SK-N-SH (cell line): ENCODE measurements at regions of chr2 and their contacts with region 1.

Region 1: DNA sequence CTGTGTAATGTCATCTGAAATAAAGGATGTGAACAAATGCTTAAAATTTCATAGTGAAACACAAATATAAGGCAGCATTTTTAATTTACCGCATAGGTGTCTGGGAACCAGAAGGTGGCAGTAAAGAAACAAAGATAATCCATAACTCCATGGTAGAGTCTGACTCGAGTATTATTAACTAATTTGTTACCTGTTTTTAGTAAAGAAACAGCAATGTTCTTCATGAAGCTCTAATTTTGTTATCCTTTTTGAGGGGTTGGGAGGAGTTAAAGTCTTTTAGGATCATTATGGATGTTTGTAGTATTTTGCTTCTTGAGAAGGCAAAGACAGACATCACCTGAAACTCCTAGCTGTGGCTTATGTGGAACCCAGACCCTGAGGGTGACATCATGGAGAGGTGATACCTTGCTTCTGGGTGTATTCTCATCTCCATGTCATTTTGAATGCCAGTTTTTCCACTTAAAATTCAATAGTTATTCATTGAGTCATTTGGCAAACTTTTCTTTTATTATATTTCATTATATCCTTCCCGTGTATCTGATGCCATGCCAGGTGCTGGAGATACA is 286.2 kb upstream of the EPAS1 start:
- DNase-seq: peak; percentile 72
- H3K4me3 ChIP-seq: no peak overlapping the region
- H3K27ac ChIP-seq: peak overlapping the region in 1 of 2 experiments; percentile 28; a peak in 2 of 4 replicates
- H3K4me1 ChIP-seq: peaks cover 8 to 23% of the 10 kb centered on the region in 2 experiments; a peak in 3 of 4 replicates
- H3K27me3 ChIP-seq: no peaks in the 10 kb centered on the region
- CTCF ChIP-seq: peak; percentile 92
- EP300 ChIP-seq: no peak
- RAD21 ChIP-seq: peak; percentile 93

Region 2: DNA sequence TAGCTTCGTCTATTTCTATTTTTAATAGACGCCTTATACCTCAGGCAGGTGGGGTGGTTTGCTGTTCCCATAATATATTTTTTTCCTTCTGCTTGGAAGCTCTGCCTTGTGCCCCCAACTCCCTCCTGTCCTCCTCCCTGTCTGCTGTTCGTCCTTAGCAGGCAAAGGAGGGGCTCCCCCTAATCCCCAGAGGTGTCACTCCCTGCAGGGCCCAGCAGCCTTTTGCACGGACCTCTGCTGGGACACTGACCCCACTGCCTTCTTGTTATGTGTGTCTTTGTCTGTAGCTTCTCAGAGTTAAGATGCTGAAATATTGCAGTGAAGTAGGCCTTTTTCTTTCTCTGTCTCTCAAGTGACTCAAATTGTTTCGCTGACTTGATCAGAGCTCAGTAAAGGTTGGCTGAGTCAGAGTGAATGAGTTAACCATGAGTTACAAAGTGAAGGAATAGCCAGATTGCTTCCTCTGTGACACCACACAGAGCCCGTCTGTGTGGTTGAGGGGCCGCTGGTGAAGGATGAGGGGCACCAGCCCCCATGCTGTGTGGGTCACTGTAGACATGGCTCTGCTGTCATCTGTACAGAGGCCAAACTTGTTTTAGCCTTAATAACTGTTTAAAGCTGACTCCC is 311.9 kb before region 1 on chr2:
- CTCF ChIA-PET with region 1: no interaction called
- POLR2A ChIA-PET with region 1: no interaction called
- DNase-seq: no peak
- H3K4me3 ChIP-seq: no peak overlapping the region
- H3K27ac ChIP-seq: peak overlapping the region; percentile 66 to 69; a peak in 3 of 4 replicates
- H3K4me1 ChIP-seq: peaks cover 17 to 35% of the 10 kb centered on the region in 2 experiments
- H3K27me3 ChIP-seq: no peaks in the 10 kb centered on the region
- CTCF ChIP-seq: no peak
- EP300 ChIP-seq: peak in 1 of 2 experiments; percentile 49; a peak in 2 of 4 replicates
- RAD21 ChIP-seq: no peak

Region 3: DNA sequence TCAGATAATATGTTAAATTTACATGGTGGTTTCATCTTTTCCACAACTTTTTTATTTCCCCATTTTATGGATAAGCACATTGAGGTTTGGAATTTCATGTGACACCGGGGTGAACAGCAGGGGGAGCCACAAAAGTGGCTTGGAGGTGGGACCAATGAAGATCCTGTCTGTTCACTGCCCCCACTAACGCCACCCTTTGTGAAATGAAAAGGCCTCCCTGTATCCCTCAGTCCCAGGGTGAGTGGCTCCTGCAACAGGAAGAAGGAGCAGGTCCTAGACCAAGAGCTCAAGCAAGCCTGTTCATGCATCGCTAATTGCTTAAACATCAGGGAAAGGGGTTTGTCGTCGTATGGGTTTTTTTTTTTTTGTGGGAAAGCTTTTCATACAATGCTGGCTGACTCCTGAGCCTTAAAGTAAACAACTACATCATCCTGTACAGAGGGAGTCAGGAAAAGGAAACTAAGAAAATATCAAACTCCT is 18.4 kb after region 1 on chr2:
- CTCF ChIA-PET with region 1: interaction called, 19 read pairs
- POLR2A ChIA-PET with region 1: no interaction called
- DNase-seq: no peak
- H3K4me3 ChIP-seq: no peak overlapping the region
- H3K27ac ChIP-seq: no peak overlapping the region
- H3K4me1 ChIP-seq: peaks cover 5 to 9% of the 10 kb centered on the region in 2 experiments; a peak in 1 of 4 replicates
- H3K27me3 ChIP-seq: no peaks in the 10 kb centered on the region
- CTCF ChIP-seq: peak; percentile 41
- EP300 ChIP-seq: no peak
- RAD21 ChIP-seq: no peak

Region 4: DNA sequence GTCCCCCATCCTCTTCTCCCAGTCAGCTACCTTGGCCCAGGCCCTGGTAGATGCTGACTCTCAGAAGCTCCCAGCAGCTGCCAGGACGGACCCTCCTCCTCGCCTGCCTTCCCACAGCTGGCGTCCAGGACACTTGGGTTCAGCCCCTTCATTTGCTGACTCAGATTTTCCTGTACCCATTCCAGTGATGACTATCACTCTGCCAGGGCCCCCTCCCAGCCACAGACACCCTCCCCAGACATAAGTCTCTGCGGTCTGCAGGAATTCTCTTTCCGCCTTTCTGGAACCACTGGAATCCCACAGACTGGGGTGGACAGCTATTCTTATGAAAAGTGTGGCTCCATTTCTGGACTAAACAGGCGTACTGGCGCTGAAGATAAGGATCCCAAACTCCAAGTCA is 25.9 kb after region 1 on chr2:
- CTCF ChIA-PET with region 1: interaction called, 12 read pairs
- POLR2A ChIA-PET with region 1: no interaction called
- DNase-seq: no peak
- H3K4me3 ChIP-seq: no peak overlapping the region
- H3K27ac ChIP-seq: no peak overlapping the region
- H3K4me1 ChIP-seq: no peaks in the 10 kb centered on the region; a peak in 1 of 4 replicates
- H3K27me3 ChIP-seq: no peaks in the 10 kb centered on the region
- CTCF ChIP-seq: no peak
- EP300 ChIP-seq: peak in 1 of 2 experiments; percentile 53; a peak in 1 of 4 replicates
- RAD21 ChIP-seq: no peak

Region 5: DNA sequence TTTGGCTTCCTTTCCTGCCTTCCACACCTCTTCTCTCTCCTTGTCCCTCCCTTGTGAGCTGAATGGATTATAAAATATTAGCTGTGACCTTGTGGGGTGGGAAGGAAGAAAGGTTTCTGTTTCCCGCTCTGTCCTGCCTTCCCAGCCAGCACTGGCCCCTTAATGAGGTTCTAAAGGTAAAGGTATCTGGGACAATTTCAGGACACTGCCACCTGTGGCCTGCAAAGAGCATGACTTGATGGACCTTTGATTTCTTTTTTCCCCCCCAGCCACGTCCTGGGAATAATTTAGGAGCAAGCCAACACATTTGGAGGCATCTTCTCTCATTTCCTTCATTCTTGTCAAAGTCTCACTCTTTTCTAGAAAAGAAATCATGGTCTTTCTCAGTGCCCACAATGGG is 39.5 kb after region 1 on chr2:
- CTCF ChIA-PET with region 1: interaction called, 15 read pairs
- POLR2A ChIA-PET with region 1: no interaction called
- DNase-seq: no peak
- H3K4me3 ChIP-seq: no peak overlapping the region
- H3K27ac ChIP-seq: no peak overlapping the region
- H3K4me1 ChIP-seq: peaks cover 0 to 9% of the 10 kb centered on the region in 2 experiments; a peak in 1 of 4 replicates
- H3K27me3 ChIP-seq: no peaks in the 10 kb centered on the region
- CTCF ChIP-seq: peak; percentile 21; the same call in 1 of the 2 replicates
- EP300 ChIP-seq: no peak
- RAD21 ChIP-seq: no peak

Region 6: GRCh38 chr2:46062637-46063412 is 51.8 kb after region 1 on chr2:
- CTCF ChIA-PET with region 1: interaction called, 10 read pairs
- POLR2A ChIA-PET with region 1: no interaction called
- DNase-seq: peak; percentile 82
- H3K4me3 ChIP-seq: no peak overlapping the region; a peak in 1 of 4 replicates
- H3K27ac ChIP-seq: no peak overlapping the region
- H3K4me1 ChIP-seq: peaks cover 14 to 25% of the 10 kb centered on the region in 2 experiments
- H3K27me3 ChIP-seq: no peaks in the 10 kb centered on the region
- CTCF ChIP-seq: peak; percentile 99
- EP300 ChIP-seq: no peak
- RAD21 ChIP-seq: peak; percentile 97

Region 7: GRCh38 chr2:46340702-46341420 is 329.9 kb after region 1 on chr2:
- CTCF ChIA-PET with region 1: interaction called, 10 read pairs
- POLR2A ChIA-PET with region 1: no interaction called
- DNase-seq: no peak
- H3K4me3 ChIP-seq: no peak overlapping the region
- H3K27ac ChIP-seq: peak overlapping the region; percentile 57 to 99; a peak in 3 of 4 replicates
- H3K4me1 ChIP-seq: peaks cover 44 to 96% of the 10 kb centered on the region in 2 experiments
- H3K27me3 ChIP-seq: no peaks in the 10 kb centered on the region
- CTCF ChIP-seq: no peak
- EP300 ChIP-seq: no peak
- RAD21 ChIP-seq: no peak

Region 8: GRCh38 chr2:46377176-46377581 is 366.2 kb after region 1 on chr2:
- CTCF ChIA-PET with region 1: interaction called, 15 read pairs
- POLR2A ChIA-PET with region 1: no interaction called
- DNase-seq: peak; percentile 47
- H3K4me3 ChIP-seq: no peak overlapping the region
- H3K27ac ChIP-seq: peak overlapping the region in 1 of 2 experiments; percentile 98; a peak in 1 of 4 replicates
- H3K4me1 ChIP-seq: peaks cover 0 to 54% of the 10 kb centered on the region in 2 experiments; a peak in 2 of 4 replicates
- H3K27me3 ChIP-seq: no peaks in the 10 kb centered on the region
- CTCF ChIP-seq: peak; percentile 13; the same call in 1 of the 2 replicates
- EP300 ChIP-seq: no peak
- RAD21 ChIP-seq: peak; percentile 43

Region 9: GRCh38 chr2:47842846-47843245 is 1831.8 kb after region 1 on chr2:
- CTCF ChIA-PET with region 1: no interaction called
- POLR2A ChIA-PET with region 1: no interaction called
- DNase-seq: no peak
- H3K4me3 ChIP-seq: no peak overlapping the region
- H3K27ac ChIP-seq: no peak overlapping the region
- H3K4me1 ChIP-seq: no peaks in the 10 kb centered on the region; a peak in 1 of 4 replicates
- H3K27me3 ChIP-seq: no peaks in the 10 kb centered on the region
- CTCF ChIP-seq: no peak
- EP300 ChIP-seq: no peak
- RAD21 ChIP-seq: no peak